Psoas muscle (tissue), 8 donors: ENCODE measurements at regions of chr3 and their contacts with region 1.

Region 1: DNA sequence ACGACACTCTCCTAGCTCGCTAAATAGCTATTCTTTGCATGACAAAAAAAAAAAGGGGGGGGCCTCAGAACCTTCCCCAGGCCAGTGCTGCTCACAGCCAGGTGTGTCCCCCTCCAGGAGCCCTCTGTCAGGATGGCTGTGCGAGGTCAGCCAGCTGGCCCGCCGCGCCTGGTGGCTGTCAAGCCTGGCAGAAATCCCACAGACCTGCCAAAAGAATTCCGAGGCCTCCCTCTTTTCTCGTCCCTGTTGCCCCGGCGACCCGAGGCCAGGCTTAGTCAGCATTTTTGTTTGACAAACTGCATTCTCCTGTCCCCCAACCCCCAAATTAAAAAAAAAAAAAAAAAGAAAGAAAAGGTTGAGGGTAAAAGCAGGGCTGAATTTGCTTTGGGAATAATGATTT is 61.9 kb downstream of the TM4SF4 start:
- DNase-seq: peak; percentile 50 to 74
- ATAC-seq: peak; percentile 47 to 83 (median 68)
- H3K4me3 ChIP-seq: peak overlapping the region; percentile 46
- H3K27ac ChIP-seq: peak overlapping the region; percentile 52
- H3K4me1 ChIP-seq: peaks cover 36% of the 10 kb centered on the region
- H3K27me3 ChIP-seq: no peaks in the 10 kb centered on the region
- CTCF ChIP-seq: no peak

Region 2: DNA sequence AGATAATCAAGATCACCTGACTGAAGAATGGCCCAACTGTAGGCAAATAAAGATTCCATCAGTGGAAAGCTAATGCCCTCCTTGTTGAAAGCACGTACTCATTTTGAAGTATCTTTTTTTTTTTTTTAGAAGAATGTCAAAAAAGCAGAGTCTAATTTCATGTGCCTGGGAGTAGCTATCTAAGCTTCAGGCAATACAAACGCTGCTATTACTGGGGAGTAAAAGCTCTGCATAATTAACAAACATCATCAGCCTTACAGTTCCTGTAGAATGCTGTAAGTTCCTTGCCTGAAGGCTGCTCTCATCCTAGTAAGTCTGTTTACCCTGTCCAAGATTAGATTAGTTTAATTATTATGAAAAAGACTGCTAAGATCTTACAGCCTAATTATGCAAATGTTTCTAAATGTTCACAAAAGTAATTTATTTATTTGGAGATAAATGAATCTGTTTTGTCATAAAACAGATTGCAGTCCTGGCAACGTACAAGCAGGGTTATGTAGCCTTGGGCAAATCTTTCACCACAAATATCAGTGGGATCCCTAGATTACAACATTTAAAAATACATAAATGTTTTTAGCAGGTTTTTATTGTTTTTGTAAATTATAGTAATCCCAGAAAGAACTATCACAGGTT is 1290.0 kb before region 1 on chr3:
- intact Hi-C with region 1: no loop called
- DNase-seq: no peak
- ATAC-seq: no peak
- H3K4me3 ChIP-seq: no peak overlapping the region
- H3K27ac ChIP-seq: no peak overlapping the region
- H3K4me1 ChIP-seq: no peaks in the 10 kb centered on the region
- H3K27me3 ChIP-seq: no peaks in the 10 kb centered on the region
- CTCF ChIP-seq: no peak

Region 3: GRCh38 chr3:149566292-149566975 is 30.0 kb after region 1 on chr3:
- intact Hi-C with region 1: loop called in 1 of 2 experiments (anchors 5 kb)
- DNase-seq: no peak
- ATAC-seq: no peak
- H3K4me3 ChIP-seq: no peak overlapping the region
- H3K27ac ChIP-seq: no peak overlapping the region
- H3K4me1 ChIP-seq: peaks cover 22% of the 10 kb centered on the region
- H3K27me3 ChIP-seq: no peaks in the 10 kb centered on the region
- CTCF ChIP-seq: no peak

Region 4: DNA sequence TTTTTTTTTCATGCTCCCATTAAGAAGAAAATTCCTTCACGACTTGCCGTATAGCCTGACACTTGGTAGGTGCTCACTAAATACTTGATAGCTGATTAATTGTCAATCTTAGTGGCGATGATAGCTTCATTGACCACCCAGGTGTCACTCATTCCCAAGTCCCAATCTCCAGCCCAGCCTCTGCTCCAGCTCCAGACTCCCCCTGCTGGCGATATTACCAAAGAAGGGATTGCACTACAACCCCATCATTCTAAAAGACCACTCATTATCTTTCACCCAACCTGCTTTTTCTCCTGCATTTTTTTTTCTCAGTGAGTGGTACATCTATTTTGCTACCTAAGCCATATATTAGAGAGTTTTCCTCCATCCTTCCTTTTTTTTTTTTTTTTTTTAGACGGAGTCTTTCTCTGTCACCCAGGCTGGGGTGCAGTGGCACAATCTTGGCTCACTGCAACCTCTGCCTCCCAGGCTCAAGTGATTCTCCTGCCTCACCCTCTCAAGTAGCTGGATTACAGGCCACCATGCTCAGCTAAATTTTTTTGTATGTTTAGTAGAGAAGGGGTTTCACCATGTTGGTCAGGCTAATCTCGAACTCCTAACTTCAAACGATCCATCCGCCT is 235.3 kb after region 1 on chr3:
- intact Hi-C with region 1: no loop called
- DNase-seq: no peak
- ATAC-seq: peak in 3 of 4 donors; percentile 52 to 73 (median 57)
- H3K4me3 ChIP-seq: no peak overlapping the region
- H3K27ac ChIP-seq: no peak overlapping the region
- H3K4me1 ChIP-seq: no peaks in the 10 kb centered on the region
- H3K27me3 ChIP-seq: peaks cover 0 to 3% (median 0%) of the 10 kb centered on the region in 3 donors
- CTCF ChIP-seq: peak; percentile 69

Region 5: DNA sequence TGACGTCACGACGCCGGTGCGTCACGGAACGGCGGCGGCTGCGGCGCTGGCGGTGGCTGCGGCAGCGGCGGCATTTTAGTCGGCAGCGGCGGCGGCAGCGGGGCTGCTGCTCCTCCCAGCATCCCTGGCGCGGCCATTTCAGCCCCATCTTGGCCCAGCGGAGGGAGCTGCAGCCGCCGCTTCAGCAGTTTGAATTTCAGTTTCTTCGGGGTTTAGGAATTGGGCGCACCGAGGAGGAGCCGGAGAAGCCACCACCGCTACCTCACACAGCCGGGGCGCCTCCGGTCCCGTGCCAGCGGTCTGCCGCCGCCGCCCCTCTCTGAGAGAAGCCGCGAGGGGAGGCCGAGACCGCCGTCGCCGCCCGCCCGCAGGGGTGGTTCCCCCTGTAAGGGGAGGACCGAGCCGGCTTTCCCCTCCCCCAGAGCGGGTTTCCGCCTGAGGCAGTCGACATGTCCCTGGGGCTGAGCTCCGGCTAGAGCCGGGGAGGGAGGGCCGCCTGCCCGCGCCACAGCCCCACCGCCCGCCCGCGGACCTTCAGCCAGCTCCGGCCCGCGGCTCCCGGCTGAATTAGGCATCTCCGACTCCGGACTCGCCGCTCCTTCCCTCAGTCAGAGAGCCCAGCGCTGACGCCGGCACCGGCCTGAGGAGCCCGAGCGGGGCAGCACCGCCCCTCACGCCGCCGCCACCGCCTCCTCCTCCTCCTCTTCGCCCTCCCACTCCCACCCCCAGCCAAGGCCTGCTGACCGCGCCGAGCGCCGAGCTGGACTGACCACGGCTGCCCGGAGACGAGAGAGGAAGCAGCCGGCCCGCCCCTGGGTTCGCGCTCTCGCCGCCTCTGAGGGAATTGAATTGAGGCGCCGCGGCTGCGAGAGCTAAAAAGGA is 872.0 kb after region 1 on chr3 and contains the start of gene TSC22D2:
- intact Hi-C with region 1: no loop called
- DNase-seq: peak; percentile 97 to 98
- ATAC-seq: peak; percentile 74 to 82 (median 78)
- H3K4me3 ChIP-seq: peak within 1 kb of the TSS; percentile 88
- H3K27ac ChIP-seq: peak within 1 kb of the TSS; percentile 99
- H3K4me1 ChIP-seq: peaks cover 16% of the 10 kb centered on the region
- H3K27me3 ChIP-seq: no peaks in the 10 kb centered on the region
- CTCF ChIP-seq: peak; percentile 14
- total RNA-seq, gene TSC22D2: 29.7 to 63.6 (median 36.2) TPM